Activated B cell treated with CpG ODN at 0.5 μM for 24 hours (primary cell): ENCODE measurements at regions of chr7 and their contacts with region 1.

Region 1: GRCh38 chr7:66643395-66643794 is 14.7 kb downstream of the KCTD7 start:
- DNase-seq: no peak
- ATAC-seq: no peak
- H3K4me3 Mint-ChIP-seq: no peak overlapping the region
- H3K27ac Mint-ChIP-seq: no peak overlapping the region
- H3K4me1 Mint-ChIP-seq: peaks cover 13% of the 10 kb centered on the region
- H3K27me3 Mint-ChIP-seq: no peaks in the 10 kb centered on the region
- CTCF ChIP-seq: no peak

Region 2: GRCh38 chr7:66571568-66571967 is 71.8 kb before region 1 on chr7:
- CTCF ChIA-PET with region 1: no interaction called
- POLR2A ChIA-PET with region 1: interaction called, 10 read pairs
- intact Hi-C with region 1: no loop called
- DNase-seq: no peak
- ATAC-seq: no peak
- H3K4me3 Mint-ChIP-seq: no peak overlapping the region
- H3K27ac Mint-ChIP-seq: no peak overlapping the region
- H3K4me1 Mint-ChIP-seq: peaks cover 2% of the 10 kb centered on the region
- H3K27me3 Mint-ChIP-seq: no peaks in the 10 kb centered on the region
- CTCF ChIP-seq: no peak

Region 3: GRCh38 chr7:66905689-66906088 is 262.3 kb after region 1 on chr7:
- CTCF ChIA-PET with region 1: no interaction called
- POLR2A ChIA-PET with region 1: no interaction called
- intact Hi-C with region 1: no loop called
- DNase-seq: no peak
- ATAC-seq: no peak
- H3K4me3 Mint-ChIP-seq: no peak overlapping the region
- H3K27ac Mint-ChIP-seq: no peak overlapping the region
- H3K4me1 Mint-ChIP-seq: no peaks in the 10 kb centered on the region
- H3K27me3 Mint-ChIP-seq: no peaks in the 10 kb centered on the region
- CTCF ChIP-seq: no peak